ENCODE measurements at regions of chr22 and their contacts with region 1.

Region 1: GRCh38 chr22:32528984-32529982 is 54.7 kb downstream of the FBXO7 start:
- DNase-seq: peak; percentile 86
- ATAC-seq: peak; percentile 78
- H3K4me3 ChIP-seq: no peak overlapping the region
- H3K27ac ChIP-seq: peak overlapping the region; percentile 1; the same call in 1 of the 2 replicates
- H3K4me1 ChIP-seq: peaks cover 23% of the 10 kb centered on the region
- H3K27me3 ChIP-seq: no peaks in the 10 kb centered on the region
- CTCF ChIP-seq: peak; percentile 95
- POLR2A ChIP-seq: peak; percentile 67
- RAD21 ChIP-seq: peak; percentile 100

Region 2: DNA sequence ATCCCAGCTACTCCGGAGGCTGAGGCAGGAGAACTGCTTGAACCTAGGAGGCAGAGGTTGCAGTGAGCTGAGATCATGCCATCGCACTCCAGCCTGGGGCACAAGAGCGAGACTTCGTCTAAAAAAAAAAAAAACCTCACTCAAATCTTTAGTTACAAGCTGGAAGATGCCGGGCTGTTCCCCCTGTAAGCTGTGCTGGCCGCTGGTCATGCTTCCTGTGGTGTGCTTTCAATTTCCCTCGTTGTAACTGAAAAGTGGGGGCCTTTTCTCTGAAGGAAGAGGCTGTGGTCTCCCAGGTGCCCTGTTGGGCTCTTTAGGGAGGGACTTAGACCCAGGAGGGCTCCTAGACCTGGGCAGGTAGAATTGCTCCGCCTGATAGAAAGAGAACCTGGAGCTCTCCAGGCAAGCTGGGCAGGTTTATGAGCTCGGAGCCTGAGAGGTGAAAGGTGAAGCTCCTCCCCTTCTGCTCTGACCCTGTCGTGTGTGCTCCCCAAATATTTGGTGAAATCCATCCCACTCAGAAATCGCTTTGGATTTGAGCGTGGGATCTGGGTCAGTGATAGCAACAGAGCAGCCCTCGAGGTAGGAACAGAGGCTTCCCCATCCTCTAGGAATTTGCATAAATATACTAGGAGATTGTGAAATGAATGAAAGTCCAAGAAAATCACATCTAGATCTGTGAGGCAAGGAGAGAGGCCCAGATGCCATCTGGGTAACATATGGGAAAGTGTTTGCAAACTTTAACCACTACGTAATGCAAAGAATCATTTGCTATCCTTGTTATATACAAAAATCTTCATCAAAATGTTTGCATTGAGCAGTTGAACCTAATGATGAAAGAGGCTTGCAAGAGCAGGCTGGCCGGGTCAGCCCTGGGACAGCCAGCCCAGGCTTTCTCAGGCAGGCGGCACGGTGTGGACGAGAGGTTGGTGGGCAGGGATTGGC is 99.6 kb after region 1 on chr22:
- CTCF ChIA-PET with region 1: interaction called, 3 read pairs
- POLR2A ChIA-PET with region 1: no interaction called
- dilution Hi-C with region 1: no loop called
- in situ Hi-C with region 1: loop called (anchors 5 kb)
- intact Hi-C with region 1: no loop called
- DNase-seq: peak; percentile 97
- ATAC-seq: peak; percentile 86
- H3K4me3 ChIP-seq: no peak overlapping the region
- H3K27ac ChIP-seq: peak overlapping the region; percentile 100
- H3K4me1 ChIP-seq: peaks cover 24% of the 10 kb centered on the region
- H3K27me3 ChIP-seq: no peaks in the 10 kb centered on the region
- CTCF ChIP-seq: no peak
- POLR2A ChIP-seq: no peak
- RAD21 ChIP-seq: no peak